Aorta (tissue), 5 donors: ENCODE measurements at regions of chr21 and their contacts with region 1.

Region 1: GRCh38 chr21:33655591-33656221 is 13.4 kb downstream of the ITSN1 start:
- DNase-seq: no peak
- ATAC-seq: no peak
- H3K4me3 ChIP-seq: no peak overlapping the region
- H3K27ac ChIP-seq: peak overlapping the region; percentile 8 to 78
- H3K4me1 ChIP-seq: peaks cover 0 to 3% of the 10 kb centered on the region in 2 donors
- H3K27me3 ChIP-seq: no peaks in the 10 kb centered on the region

Region 2: GRCh38 chr21:33682992-33683627 is 27.4 kb after region 1 on chr21:
- intact Hi-C with region 1: loop called in 1 of 2 experiments (anchors 5 kb)
- DNase-seq: no peak
- ATAC-seq: peak; percentile 52
- H3K4me3 ChIP-seq: no peak overlapping the region
- H3K27ac ChIP-seq: peak overlapping the region in 1 of 2 donors; percentile 67
- H3K4me1 ChIP-seq: peaks cover 0 to 13% of the 10 kb centered on the region in 2 donors
- H3K27me3 ChIP-seq: no peaks in the 10 kb centered on the region

Region 3: GRCh38 chr21:33729641-33730040 is 73.9 kb after region 1 on chr21:
- intact Hi-C with region 1: loop called in 1 of 2 experiments (anchors 10 kb)
- DNase-seq: no peak
- ATAC-seq: no peak
- H3K4me3 ChIP-seq: no peak overlapping the region
- H3K27ac ChIP-seq: no peak overlapping the region
- H3K4me1 ChIP-seq: no peaks in the 10 kb centered on the region
- H3K27me3 ChIP-seq: no peaks in the 10 kb centered on the region

Region 4: GRCh38 chr21:33761441-33762036 is 105.8 kb after region 1 on chr21:
- intact Hi-C with region 1: loop called in 1 of 2 experiments (anchors 5 kb)
- DNase-seq: no peak
- ATAC-seq: peak; percentile 89
- H3K4me3 ChIP-seq: no peak overlapping the region
- H3K27ac ChIP-seq: peak overlapping the region; percentile 19 to 95
- H3K4me1 ChIP-seq: peaks cover 0 to 3% of the 10 kb centered on the region in 2 donors
- H3K27me3 ChIP-seq: no peaks in the 10 kb centered on the region